Caco-2 (cell line): ENCODE measurements at regions of chr6 and their contacts with region 1.

Region 1: DNA sequence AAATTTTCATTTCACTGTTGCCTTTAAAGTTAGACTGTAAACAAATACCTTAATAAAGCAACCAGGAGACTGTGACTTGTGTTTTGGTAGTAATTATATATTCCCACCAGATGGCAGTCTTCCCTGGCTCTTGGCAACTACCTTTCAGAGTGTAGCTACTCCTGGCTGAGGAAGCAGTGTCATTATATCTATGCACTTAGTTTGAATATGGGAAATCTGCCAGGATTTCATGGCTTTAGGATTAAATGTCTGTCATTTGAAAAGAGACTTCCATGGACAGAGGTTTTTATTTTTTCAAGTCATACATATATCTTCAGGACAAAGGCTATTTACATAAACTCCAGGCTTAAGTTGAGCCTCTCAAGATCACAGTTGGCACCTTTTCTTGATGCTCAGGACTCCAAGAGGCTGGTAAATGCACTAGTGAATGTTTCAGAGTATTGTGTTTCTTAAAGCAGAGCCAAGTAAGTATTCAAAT is 160.1 kb downstream of the C6orf58 start:
- DNase-seq: peak in 1 of 2 experiments; percentile 56
- H3K4me3 ChIP-seq: no peak overlapping the region
- H3K4me3 Mint-ChIP-seq: no peak overlapping the region
- H3K27ac Mint-ChIP-seq: no peak overlapping the region
- H3K4me1 ChIP-seq: no peaks in the 10 kb centered on the region
- H3K4me1 Mint-ChIP-seq: no peaks in the 10 kb centered on the region
- H3K27me3 ChIP-seq: no peaks in the 10 kb centered on the region
- H3K27me3 Mint-ChIP-seq: peaks cover 3% of the 10 kb centered on the region
- CTCF ChIP-seq: peak; percentile 56 to 57

Region 2: GRCh38 chr6:127716465-127716864 is 20.6 kb before region 1 on chr6:
- CTCF ChIA-PET with region 1: no interaction called
- POLR2A ChIA-PET with region 1: no interaction called
- intact Hi-C with region 1: no loop called
- DNase-seq: no peak
- H3K4me3 ChIP-seq: no peak overlapping the region
- H3K4me3 Mint-ChIP-seq: no peak overlapping the region
- H3K27ac Mint-ChIP-seq: no peak overlapping the region
- H3K4me1 ChIP-seq: no peaks in the 10 kb centered on the region
- H3K4me1 Mint-ChIP-seq: no peaks in the 10 kb centered on the region
- H3K27me3 ChIP-seq: no peaks in the 10 kb centered on the region
- H3K27me3 Mint-ChIP-seq: peaks cover 4% of the 10 kb centered on the region
- CTCF ChIP-seq: no peak

Region 3: GRCh38 chr6:127775371-127775770 is 38.3 kb after region 1 on chr6:
- CTCF ChIA-PET with region 1: no interaction called
- POLR2A ChIA-PET with region 1: no interaction called
- intact Hi-C with region 1: no loop called
- DNase-seq: no peak
- H3K4me3 ChIP-seq: no peak overlapping the region
- H3K4me3 Mint-ChIP-seq: no peak overlapping the region
- H3K27ac Mint-ChIP-seq: no peak overlapping the region
- H3K4me1 ChIP-seq: no peaks in the 10 kb centered on the region
- H3K4me1 Mint-ChIP-seq: no peaks in the 10 kb centered on the region
- H3K27me3 ChIP-seq: no peaks in the 10 kb centered on the region
- H3K27me3 Mint-ChIP-seq: no peaks in the 10 kb centered on the region
- CTCF ChIP-seq: no peak

Region 4: DNA sequence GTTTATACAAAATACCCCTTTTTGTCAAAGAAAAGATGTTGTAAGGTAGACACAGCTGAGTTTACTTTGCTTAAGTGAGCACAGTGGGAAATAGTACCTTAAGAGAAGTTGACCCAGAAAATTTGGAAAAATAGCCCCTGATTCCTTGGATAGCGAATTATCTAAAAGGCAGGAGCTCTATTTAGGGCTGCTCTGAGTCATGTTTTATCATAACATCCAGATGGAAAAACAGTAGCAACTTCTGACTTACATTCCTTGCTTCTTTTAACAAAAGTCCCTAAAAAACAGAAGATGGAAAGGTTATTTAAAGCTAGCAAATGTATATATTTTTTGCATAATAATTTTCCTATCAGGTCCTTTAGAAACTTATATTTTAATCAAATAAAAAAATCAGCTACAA is 104.8 kb after region 1 on chr6:
- CTCF ChIA-PET with region 1: interaction called, 3 read pairs
- POLR2A ChIA-PET with region 1: no interaction called
- intact Hi-C with region 1: loop called (anchors 5 kb)
- DNase-seq: no peak
- H3K4me3 ChIP-seq: no peak overlapping the region
- H3K4me3 Mint-ChIP-seq: no peak overlapping the region
- H3K27ac Mint-ChIP-seq: no peak overlapping the region
- H3K4me1 ChIP-seq: no peaks in the 10 kb centered on the region
- H3K4me1 Mint-ChIP-seq: no peaks in the 10 kb centered on the region
- H3K27me3 ChIP-seq: no peaks in the 10 kb centered on the region
- H3K27me3 Mint-ChIP-seq: peaks cover 5% of the 10 kb centered on the region
- CTCF ChIP-seq: no peak

Region 5: GRCh38 chr6:128487055-128487454 is 750.0 kb after region 1 on chr6:
- CTCF ChIA-PET with region 1: no interaction called
- POLR2A ChIA-PET with region 1: no interaction called
- intact Hi-C with region 1: loop called (anchors 5 kb)
- DNase-seq: peak in 1 of 2 experiments; percentile 32
- H3K4me3 ChIP-seq: no peak overlapping the region
- H3K4me3 Mint-ChIP-seq: no peak overlapping the region
- H3K27ac Mint-ChIP-seq: peak overlapping the region; percentile 70
- H3K4me1 ChIP-seq: peaks cover 13% of the 10 kb centered on the region
- H3K4me1 Mint-ChIP-seq: peaks cover 36% of the 10 kb centered on the region
- H3K27me3 ChIP-seq: no peaks in the 10 kb centered on the region
- H3K27me3 Mint-ChIP-seq: no peaks in the 10 kb centered on the region
- CTCF ChIP-seq: peak; percentile 46 to 48

Region 6: GRCh38 chr6:128731249-128732165 is 994.5 kb after region 1 on chr6:
- CTCF ChIA-PET with region 1: interaction called, 11 read pairs
- POLR2A ChIA-PET with region 1: no interaction called
- intact Hi-C with region 1: loop called (anchors 1 kb)
- DNase-seq: peak in 1 of 2 experiments; percentile 37
- H3K4me3 ChIP-seq: no peak overlapping the region
- H3K4me3 Mint-ChIP-seq: no peak overlapping the region
- H3K27ac Mint-ChIP-seq: no peak overlapping the region
- H3K4me1 ChIP-seq: no peaks in the 10 kb centered on the region
- H3K4me1 Mint-ChIP-seq: no peaks in the 10 kb centered on the region
- H3K27me3 ChIP-seq: no peaks in the 10 kb centered on the region
- H3K27me3 Mint-ChIP-seq: peaks cover 14% of the 10 kb centered on the region
- CTCF ChIP-seq: peak; percentile 38 to 45